ENCODE measurements at regions of chr9 and their contacts with region 1.

Region 1: GRCh38 chr9:112174218-112174964 is 706 bp downstream of the SUSD1 start:
- DNase-seq: peak; percentile 91
- ATAC-seq: peak; percentile 86
- H3K4me3 Mint-ChIP-seq: peak overlapping the region; percentile 86
- H3K27ac Mint-ChIP-seq: peak overlapping the region; percentile 94
- H3K4me1 Mint-ChIP-seq: peaks cover 68% of the 10 kb centered on the region
- H3K27me3 Mint-ChIP-seq: no peaks in the 10 kb centered on the region

Region 2: GRCh38 chr9:112184946-112185345 is 10.6 kb after region 1 on chr9:
- CTCF ChIA-PET with region 1: interaction called, 11 read pairs
- DNase-seq: no peak
- ATAC-seq: no peak
- H3K4me3 Mint-ChIP-seq: no peak overlapping the region
- H3K27ac Mint-ChIP-seq: no peak overlapping the region
- H3K4me1 Mint-ChIP-seq: peaks cover 22% of the 10 kb centered on the region
- H3K27me3 Mint-ChIP-seq: peaks cover 5% of the 10 kb centered on the region

Region 3: DNA sequence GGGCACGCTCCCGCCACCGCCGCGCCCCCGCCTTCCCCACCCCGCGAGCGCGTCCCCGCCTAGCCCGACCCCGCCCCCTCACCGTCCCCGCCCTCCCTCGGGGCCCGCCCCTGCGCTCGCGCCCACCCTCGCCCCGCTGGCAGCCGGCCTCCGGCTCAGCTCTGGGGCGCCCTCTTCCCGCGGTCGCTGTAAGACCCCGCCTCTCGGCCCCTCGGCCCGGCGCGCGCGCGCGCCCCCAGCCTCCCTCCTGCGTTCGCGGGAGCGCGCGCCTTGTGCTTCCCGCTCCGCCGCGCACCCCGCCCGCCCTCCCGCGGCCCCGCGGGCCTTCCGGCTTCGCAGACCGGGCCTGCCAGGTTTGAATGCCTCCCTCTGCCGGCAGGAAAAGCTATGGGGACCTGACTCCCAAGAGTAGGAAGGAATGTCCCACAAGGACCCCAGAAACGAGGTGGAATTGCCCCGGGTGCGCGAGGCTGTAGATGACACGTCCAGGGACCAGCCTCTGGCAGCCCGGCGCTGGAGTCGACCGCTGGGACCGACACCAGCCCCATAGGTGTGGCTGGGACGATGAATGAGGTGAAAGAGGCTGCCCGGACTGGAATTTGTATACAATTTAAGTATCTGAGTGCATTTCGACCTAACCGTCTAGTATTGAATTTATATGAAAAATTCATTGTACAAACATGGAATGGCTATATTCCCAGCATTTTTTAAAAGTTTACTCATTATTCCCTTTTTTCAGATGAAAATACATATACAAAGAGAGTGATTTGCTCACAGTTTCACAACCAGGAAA is 159.4 kb after region 1 on chr9:
- CTCF ChIA-PET with region 1: interaction called, 21 read pairs
- DNase-seq: peak; percentile 95
- ATAC-seq: peak; percentile 84
- H3K4me3 Mint-ChIP-seq: peak overlapping the region; percentile 94
- H3K27ac Mint-ChIP-seq: peak overlapping the region; percentile 98
- H3K4me1 Mint-ChIP-seq: peaks cover 27% of the 10 kb centered on the region
- H3K27me3 Mint-ChIP-seq: peaks cover 2% of the 10 kb centered on the region